PC-9 (cell line): ENCODE measurements at regions of chr11 and their contacts with region 1.

Region 1: GRCh38 chr11:129658526-129658867 is 157.2 kb upstream of the TMEM45B start:
- DNase-seq: no peak
- H3K4me3 ChIP-seq: no peak overlapping the region
- H3K27ac ChIP-seq: no peak overlapping the region
- H3K4me1 ChIP-seq: 0 out of 2 replicates have a peak, but pooled peaks cover 2% of the 10 kb centered on the region
- H3K27me3 ChIP-seq: no peaks in the 10 kb centered on the region
- CTCF ChIP-seq: no peak

Region 2: GRCh38 chr11:128878455-128878854 is 780.0 kb before region 1 on chr11:
- CTCF ChIA-PET with region 1: no interaction called
- POLR2A ChIA-PET with region 1: interaction called, 12 read pairs
- intact Hi-C with region 1: no loop called
- DNase-seq: no peak
- H3K4me3 ChIP-seq: no peak overlapping the region
- H3K27ac ChIP-seq: no peak overlapping the region
- H3K4me1 ChIP-seq: no peaks in the 10 kb centered on the region
- H3K27me3 ChIP-seq: peaks cover 37% of the 10 kb centered on the region
- CTCF ChIP-seq: no peak